ENCODE measurements at regions of chr11 and their contacts with region 1.

Region 1: DNA sequence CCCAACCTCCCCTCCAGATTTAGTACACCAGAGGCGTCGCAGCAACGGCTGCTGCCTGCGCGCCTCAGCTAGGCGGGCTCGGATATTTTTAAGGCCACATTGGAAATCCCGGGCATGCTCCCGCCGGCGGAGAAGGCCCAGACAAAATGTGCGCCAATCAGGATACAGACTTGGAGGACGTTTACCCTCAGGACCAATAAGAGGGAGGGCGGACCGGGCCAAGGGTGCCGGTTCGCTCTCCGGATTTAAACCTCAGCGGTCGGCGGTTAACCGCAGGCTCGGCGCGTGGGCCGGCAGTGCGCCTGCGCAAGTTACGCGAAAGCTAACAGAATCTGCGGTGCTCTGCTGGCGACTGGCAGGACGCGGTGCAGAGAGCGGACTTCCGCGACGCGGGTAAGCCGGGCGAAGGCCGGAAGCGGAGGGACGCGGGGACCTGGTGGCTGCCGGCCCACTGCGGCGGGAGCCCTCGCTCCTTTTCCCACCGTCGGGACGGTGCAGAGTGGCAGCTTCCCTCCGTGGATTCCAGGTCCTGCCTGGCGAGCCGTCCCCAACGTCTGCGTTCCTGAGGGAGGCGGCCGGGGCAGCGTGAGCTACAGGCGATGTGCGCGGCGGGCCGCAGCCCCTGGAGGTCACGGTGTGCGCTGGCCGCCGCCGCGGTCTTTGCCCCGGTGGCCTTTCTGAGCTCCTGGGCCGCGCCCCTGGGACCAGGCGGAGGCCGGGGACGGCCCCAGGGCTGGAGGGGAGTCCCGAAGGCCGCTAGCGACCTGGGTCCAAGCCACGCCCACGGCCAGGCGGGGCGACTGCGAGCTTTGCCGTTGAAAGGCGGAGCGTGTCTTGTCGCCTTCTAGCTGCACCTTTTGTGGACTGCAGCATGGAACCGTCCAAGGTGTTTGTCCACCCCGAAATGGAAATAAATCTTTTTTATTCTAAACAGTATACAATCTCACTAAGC is at the start of gene HYLS1:
- DNase-seq: peak; percentile 100
- H3K4me3 Mint-ChIP-seq: peak within 1 kb of the TSS; percentile 89
- H3K27ac Mint-ChIP-seq: peak within 1 kb of the TSS; percentile 97
- H3K4me1 Mint-ChIP-seq: peaks cover 34% of the 10 kb centered on the region
- H3K27me3 Mint-ChIP-seq: peaks cover 4% of the 10 kb centered on the region
- total RNA-seq, gene HYLS1: 6.7 and 7.6 TPM in 2 replicates

Region 2: GRCh38 chr11:124953753-124954589 is 933.7 kb before region 1 on chr11 and contains the start of gene CCDC15:
- intact Hi-C with region 1: loop called (anchors 10 kb)
- DNase-seq: peak; percentile 99
- H3K4me3 Mint-ChIP-seq: no peak within 1 kb of the TSS
- H3K27ac Mint-ChIP-seq: no peak within 1 kb of the TSS
- H3K4me1 Mint-ChIP-seq: peaks cover 6% of the 10 kb centered on the region
- H3K27me3 Mint-ChIP-seq: no peaks in the 10 kb centered on the region
- total RNA-seq, gene CCDC15: 4.1 and 4.5 TPM in 2 replicates

Region 3: GRCh38 chr11:125568970-125569914 is 318.4 kb before region 1 on chr11 and contains the start of gene EI24:
- intact Hi-C with region 1: loop called (anchors 1 kb)
- DNase-seq: peak; percentile 97
- H3K4me3 Mint-ChIP-seq: peak within 1 kb of the TSS; percentile 96
- H3K27ac Mint-ChIP-seq: peak within 1 kb of the TSS; percentile 94
- H3K4me1 Mint-ChIP-seq: peaks cover 18% of the 10 kb centered on the region
- H3K27me3 Mint-ChIP-seq: no peaks in the 10 kb centered on the region
- total RNA-seq, gene EI24: 61.7 TPM in 2 replicates

Region 4: DNA sequence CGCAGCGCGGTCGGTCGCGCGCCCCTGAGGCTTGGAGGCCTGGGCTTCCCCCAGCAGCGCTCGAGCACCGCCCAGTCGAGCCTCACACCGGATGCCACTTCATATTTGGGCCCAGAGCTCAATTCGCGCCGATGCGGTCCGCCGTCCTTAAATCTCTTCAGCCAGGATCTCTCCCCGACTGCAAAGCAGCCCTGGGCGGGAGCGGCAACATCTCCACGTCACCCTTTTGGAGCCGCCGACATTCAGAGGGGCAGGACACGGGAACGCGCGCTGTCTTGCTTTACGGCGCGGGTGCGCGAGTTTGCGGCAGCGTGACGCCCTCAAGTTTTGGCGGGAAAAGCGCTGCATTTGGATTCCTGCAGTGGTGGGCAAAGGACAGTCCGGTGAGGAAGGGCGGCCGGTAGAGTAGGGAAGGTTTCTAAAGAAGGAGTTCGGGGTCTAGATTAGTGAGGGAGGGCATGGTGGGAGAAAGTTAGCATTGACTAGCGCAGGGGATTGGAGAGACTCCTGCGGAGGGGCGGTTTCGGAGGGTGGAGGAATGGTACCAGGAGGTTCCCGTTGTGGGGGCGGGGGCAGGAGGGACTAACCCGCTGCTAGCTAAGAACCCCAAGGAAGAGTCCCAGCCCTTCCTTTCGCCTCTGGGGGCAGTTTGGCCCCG is 261.9 kb before region 1 on chr11:
- intact Hi-C with region 1: loop called (anchors 1 kb)
- DNase-seq: peak; percentile 96
- H3K4me3 Mint-ChIP-seq: peak overlapping the region; percentile 93
- H3K27ac Mint-ChIP-seq: peak overlapping the region; percentile 95
- H3K4me1 Mint-ChIP-seq: peaks cover 24% of the 10 kb centered on the region
- H3K27me3 Mint-ChIP-seq: no peaks in the 10 kb centered on the region

Region 5: DNA sequence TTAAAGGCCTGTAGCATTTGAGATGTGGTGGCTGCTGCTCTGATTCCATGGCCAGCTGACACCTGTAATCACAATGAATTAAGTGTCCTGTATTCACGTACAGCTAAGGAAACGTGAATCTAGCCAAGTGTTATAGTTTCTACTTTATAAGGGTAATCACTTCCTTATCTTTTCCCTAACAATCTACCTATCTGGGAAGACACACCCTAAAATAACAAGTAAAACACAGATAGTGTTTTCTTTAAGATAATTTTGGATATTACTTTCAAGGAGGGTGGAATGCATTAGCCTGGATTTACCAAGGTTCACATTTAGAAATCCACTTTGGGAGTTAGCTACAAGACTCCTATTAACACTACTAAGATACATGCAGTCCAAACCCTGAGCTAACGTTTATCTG is 163.5 kb after region 1 on chr11:
- intact Hi-C with region 1: no loop called
- DNase-seq: no peak
- H3K4me3 Mint-ChIP-seq: no peak overlapping the region
- H3K27ac Mint-ChIP-seq: no peak overlapping the region
- H3K4me1 Mint-ChIP-seq: no peaks in the 10 kb centered on the region
- H3K27me3 Mint-ChIP-seq: peaks cover 11% of the 10 kb centered on the region

Region 6: DNA sequence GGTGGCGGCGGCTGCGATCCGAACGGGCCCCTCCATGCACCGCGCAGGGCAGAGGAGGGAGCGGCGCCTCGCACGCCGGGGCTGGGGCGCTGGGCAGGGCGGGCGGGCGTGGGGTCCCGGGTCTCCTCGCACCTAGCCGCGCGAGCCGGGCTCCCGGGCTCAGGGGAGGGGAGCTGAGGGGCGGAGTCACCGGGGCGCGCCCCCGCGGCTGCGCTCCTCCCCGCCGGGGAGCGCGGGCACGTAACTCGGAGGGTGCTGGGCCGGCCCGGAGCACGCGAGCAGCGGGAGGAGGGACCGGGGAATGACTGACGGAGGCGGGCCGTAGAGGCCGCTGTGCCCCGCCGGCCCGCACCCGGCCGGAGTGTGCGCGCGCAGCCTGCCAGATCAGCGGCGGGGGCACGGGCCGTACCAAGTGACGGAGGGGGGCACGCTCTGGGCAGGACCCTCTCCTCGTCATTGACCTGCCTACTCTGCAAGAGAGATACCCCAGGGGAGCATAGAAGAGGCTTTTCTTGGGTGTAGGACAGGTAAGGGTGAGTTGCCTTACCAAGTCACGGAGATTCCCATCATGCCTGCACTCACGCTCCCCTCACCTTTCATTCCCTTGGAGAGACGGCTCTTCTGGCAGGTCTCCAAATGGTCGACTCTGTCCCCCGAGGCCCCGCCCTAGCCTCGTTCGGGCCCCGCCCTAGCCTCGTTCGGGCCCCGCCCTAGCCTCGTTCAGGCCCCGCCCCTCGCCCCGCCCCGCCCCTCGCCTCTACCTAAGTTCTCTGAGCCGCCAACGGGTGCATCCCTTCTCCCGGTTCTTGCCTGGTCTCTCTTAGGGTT is 175.2 kb after region 1 on chr11 and contains the start of gene CDON:
- intact Hi-C with region 1: loop called (anchors 1 kb)
- DNase-seq: peak; percentile 98
- H3K4me3 Mint-ChIP-seq: peak within 1 kb of the TSS; percentile 80
- H3K27ac Mint-ChIP-seq: peak within 1 kb of the TSS; percentile 97
- H3K4me1 Mint-ChIP-seq: peaks cover 5% of the 10 kb centered on the region
- H3K27me3 Mint-ChIP-seq: peaks cover 46% of the 10 kb centered on the region
- total RNA-seq, gene CDON: 1.9 TPM in 2 replicates

Measured in activated CD4-positive, alpha-beta T cell treated with anti-CD3 and anti-CD28 coated beads, Interleukin-2, amount 10 ng/mL, durations not matched to agents 24 days and 14 days (primary cell).